ENCODE measurements at regions of chr11 and their contacts with region 1.

Region 1: DNA sequence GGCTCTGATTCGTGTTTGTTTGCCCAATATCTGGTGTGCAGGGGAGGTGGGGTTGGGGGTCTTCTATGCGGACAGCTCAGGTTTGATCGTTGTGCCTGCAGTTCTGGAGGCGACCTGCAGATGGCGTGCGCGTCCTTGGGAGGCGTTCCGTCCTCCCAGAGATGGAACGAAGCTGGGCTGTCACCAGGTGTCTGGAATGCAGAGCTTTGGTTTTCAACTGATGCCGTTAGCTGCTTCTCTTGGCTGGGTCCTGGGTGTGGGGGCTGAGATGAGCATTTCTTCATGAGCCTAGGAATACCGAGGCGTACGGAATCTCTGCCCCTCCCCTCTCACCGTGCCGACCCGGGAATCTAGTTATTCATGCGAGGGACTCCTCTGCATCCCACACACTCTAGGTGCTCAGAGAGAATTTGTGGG is 98.6 kb downstream of the CEP164 start:
- DNase-seq: peak; percentile 76
- ATAC-seq: peak; percentile 76

Region 2: DNA sequence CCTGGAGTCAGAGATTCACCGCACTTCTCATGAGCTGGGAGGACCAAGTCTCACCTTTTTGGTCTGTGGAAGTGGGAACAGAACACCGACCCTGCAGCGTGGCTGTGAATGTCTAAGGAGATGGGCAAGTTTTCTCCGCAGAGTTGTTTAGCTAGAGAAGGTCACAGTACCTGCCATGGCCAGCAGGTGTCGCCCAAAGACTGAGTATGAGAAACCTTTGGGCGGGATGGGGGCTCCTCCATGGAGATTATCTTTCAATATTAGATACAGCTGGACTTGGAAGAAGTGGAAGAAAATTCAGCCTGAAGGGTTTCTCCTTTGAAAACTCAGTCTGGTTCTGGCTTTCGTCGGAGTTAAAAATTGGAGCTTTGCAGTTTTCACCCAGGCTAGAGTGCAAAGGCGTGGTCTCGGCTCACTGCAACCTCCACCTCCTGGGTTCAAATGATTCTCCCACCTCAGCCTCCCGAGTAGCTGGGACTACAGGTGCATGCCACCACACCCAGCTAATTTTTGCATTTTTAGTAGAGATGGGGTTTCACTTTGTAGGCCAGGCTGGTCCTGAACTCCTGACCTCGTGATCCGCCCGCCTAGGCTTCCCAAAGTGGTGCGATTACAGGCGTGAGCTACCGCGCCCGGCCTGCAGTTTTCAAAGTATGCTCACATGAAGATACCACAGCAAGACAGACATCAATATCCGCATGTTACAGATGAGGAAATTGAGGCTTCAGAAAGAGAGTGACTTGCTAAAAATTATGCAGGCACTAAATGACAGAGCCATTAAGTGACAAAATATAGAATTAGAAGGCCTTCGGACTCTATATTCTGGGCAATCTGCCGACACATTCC is 381.4 kb after region 1 on chr11:
- intact Hi-C with region 1: loop called (anchors 5 kb)
- DNase-seq: peak; percentile 90
- ATAC-seq: peak; percentile 57